Breast epithelium (tissue), 4 donors: ENCODE measurements at regions of chr10 and their contacts with region 1.

Region 1: GRCh38 chr10:120948889-120949608 is 97.9 kb downstream of the WDR11 start:
- DNase-seq: peak in 1 of 2 donors; percentile 33
- H3K4me3 ChIP-seq: peak overlapping the region; percentile 20 to 61 (median 28)
- H3K27ac ChIP-seq: no peak overlapping the region
- H3K4me1 ChIP-seq: no peaks in the 10 kb centered on the region
- H3K27me3 ChIP-seq: peaks cover 0 to 21% of the 10 kb centered on the region in 2 donors
- CTCF ChIP-seq: peak in 2 of 3 donors; percentile 53 to 73
- POLR2A ChIP-seq: no peak

Region 2: DNA sequence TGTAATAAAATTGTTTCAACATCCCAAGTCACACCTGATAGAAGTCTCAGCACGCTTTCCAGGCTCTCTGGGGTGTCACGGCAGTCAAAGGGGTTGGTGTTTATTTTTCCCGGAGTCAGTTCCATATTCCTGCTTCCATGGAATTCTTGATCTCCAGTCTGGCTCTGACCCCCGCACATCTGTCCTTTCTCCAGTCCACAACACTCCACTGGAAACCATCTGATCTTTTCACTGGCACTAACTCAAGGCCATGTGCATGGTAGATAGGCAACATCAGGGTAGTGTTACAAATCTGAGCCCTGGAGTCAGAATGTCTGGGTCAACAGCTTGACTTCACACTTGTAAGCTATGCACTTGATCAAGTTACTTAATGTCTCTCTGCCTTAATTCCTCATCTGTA is 78.3 kb after region 1 on chr10:
- intact Hi-C with region 1: no loop called
- DNase-seq: no peak
- H3K4me3 ChIP-seq: no peak overlapping the region
- H3K27ac ChIP-seq: no peak overlapping the region
- H3K4me1 ChIP-seq: no peaks in the 10 kb centered on the region
- H3K27me3 ChIP-seq: no peaks in the 10 kb centered on the region
- CTCF ChIP-seq: no peak
- POLR2A ChIP-seq: no peak

Region 3: DNA sequence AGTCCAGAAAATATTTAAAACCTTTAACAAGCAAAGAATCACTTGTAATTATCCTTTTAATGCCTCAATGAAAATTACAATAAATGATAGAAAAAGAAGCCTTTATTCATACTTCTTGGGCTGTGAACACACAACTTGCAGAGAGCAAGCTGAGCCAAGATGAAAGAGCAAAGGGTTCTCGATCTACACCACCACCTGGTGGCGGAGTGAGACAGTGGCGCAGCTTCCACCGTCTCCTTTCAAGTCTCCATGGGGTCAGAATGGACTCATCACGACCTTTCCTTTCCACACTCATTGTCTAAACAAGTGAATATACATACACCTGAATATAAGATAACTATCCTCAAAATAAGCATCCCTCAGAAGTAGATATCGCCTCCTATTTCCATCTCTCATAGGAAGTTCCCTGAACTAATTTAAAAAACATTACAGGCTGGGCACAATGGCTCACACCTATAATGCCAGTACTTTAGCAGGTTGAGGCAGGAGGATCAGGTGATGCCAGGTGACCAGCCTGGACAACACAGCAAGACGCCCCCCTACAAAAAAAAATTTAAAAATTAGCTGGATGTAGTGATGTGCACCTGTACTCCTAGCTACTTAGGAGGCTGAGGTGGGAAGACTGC is 938.1 kb after region 1 on chr10:
- intact Hi-C with region 1: loop called (anchors 5 kb)
- DNase-seq: no peak
- H3K4me3 ChIP-seq: no peak overlapping the region
- H3K27ac ChIP-seq: no peak overlapping the region
- H3K4me1 ChIP-seq: no peaks in the 10 kb centered on the region
- H3K27me3 ChIP-seq: no peaks in the 10 kb centered on the region
- CTCF ChIP-seq: peak; percentile 51 to 68 (median 59)
- POLR2A ChIP-seq: no peak

Region 4: GRCh38 chr10:121899727-121900126 is 950.7 kb after region 1 on chr10:
- intact Hi-C with region 1: loop called (anchors 5 kb)
- DNase-seq: no peak
- H3K4me3 ChIP-seq: no peak overlapping the region
- H3K27ac ChIP-seq: no peak overlapping the region
- H3K4me1 ChIP-seq: no peaks in the 10 kb centered on the region
- H3K27me3 ChIP-seq: no peaks in the 10 kb centered on the region
- CTCF ChIP-seq: no peak
- POLR2A ChIP-seq: no peak